ENCODE measurements at regions of chr13 and their contacts with region 1.

Region 1: GRCh38 chr13:32586080-32586900 is at the start of gene PDS5B:
- DNase-seq: peak; percentile 93
- H3K4me3 ChIP-seq: peak within 1 kb of the TSS; percentile 77 to 97 (median 94)
- H3K27ac ChIP-seq: peak within 1 kb of the TSS; percentile 67
- H3K4me1 ChIP-seq: peaks cover 10% of the 10 kb centered on the region
- H3K27me3 ChIP-seq: no peaks in the 10 kb centered on the region
- CTCF ChIP-seq: peak; percentile 37 to 77
- total RNA-seq, gene PDS5B: 14.3 to 22.4 TPM

Region 2: DNA sequence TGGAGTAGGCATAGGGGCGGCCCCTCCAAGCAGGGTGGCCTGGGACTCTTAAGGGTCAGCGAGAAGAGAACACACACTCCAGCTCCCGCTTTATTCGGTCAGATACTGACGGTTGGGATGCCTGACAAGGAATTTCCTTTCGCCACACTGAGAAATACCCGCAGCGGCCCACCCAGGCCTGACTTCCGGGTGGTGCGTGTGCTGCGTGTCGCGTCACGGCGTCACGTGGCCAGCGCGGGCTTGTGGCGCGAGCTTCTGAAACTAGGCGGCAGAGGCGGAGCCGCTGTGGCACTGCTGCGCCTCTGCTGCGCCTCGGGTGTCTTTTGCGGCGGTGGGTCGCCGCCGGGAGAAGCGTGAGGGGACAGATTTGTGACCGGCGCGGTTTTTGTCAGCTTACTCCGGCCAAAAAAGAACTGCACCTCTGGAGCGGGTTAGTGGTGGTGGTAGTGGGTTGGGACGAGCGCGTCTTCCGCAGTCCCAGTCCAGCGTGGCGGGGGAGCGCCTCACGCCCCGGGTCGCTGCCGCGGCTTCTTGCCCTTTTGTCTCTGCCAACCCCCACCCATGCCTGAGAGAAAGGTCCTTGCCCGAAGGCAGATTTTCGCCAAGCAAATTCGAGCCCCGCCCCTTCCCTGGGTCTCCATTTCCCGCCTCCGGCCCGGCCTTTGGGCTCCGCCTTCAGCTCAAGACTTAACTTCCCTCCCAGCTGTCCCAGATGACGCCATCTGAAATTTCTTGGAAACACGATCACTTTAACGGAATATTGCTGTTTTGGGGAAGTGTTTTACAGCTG is 270.9 kb before region 1 on chr13 and contains the starts of genes BRCA2 and ZAR1L:
- CTCF ChIA-PET with region 1: interaction called, 3 read pairs
- dilution Hi-C with region 1: no loop called
- in situ Hi-C with region 1: no loop called
- intact Hi-C with region 1: loop called (anchors 5 kb)
- DNase-seq: peak; percentile 83
- H3K4me3 ChIP-seq: peak within 1 kb of the TSS; percentile 70 to 92 (median 70)
- H3K27ac ChIP-seq: peak within 1 kb of the TSS; percentile 95
- H3K4me1 ChIP-seq: peaks cover 5% of the 10 kb centered on the region
- H3K27me3 ChIP-seq: no peaks in the 10 kb centered on the region
- CTCF ChIP-seq: no peak
- total RNA-seq, gene BRCA2: 3.0 to 16.0 TPM
- total RNA-seq, gene ZAR1L: not detected

Region 3: DNA sequence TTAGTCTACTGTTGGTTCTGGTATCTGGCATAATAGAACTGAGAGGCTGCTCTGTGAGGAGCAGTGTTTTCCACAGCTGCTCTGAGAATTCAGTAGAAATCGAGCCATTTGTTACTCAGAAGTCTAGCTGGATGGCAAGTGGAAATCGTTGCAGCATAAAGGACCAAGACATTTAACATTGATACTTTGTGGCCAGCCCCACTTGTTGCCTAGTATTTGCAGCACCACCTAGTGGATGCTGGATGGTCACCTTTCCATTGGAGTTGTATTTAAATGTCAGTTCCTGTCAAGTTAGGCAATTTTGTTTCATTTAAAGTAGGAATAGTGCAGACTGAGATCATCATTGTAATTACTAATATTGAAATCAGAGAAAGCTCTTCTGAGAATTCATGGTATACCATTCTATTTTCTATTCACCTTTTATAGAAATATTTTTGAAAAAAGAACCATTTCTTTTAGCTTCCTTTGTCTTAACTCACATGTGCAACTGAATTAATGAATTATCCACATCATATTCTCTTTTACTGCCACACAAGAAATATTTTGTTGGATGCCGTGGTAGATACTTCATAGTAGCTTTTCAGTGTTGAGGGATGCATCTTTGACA is 64.5 kb after region 1 on chr13:
- CTCF ChIA-PET with region 1: no interaction called
- dilution Hi-C with region 1: no loop called
- in situ Hi-C with region 1: loop called in 1 of 2 experiments (anchors 10 kb)
- intact Hi-C with region 1: loop called (anchors 1 kb)
- DNase-seq: peak; percentile 53
- H3K4me3 ChIP-seq: no peak overlapping the region
- H3K27ac ChIP-seq: no peak overlapping the region
- H3K4me1 ChIP-seq: no peaks in the 10 kb centered on the region
- H3K27me3 ChIP-seq: no peaks in the 10 kb centered on the region
- CTCF ChIP-seq: peak; percentile 81 to 83

Region 4: GRCh38 chr13:32911506-32911905 is 325.2 kb after region 1 on chr13:
- CTCF ChIA-PET with region 1: no interaction called
- dilution Hi-C with region 1: no loop called
- in situ Hi-C with region 1: loop called in 1 of 2 experiments (anchors 25 kb)
- intact Hi-C with region 1: loop called (anchors 1 kb)
- DNase-seq: peak; percentile 51
- H3K4me3 ChIP-seq: no peak overlapping the region
- H3K27ac ChIP-seq: no peak overlapping the region
- H3K4me1 ChIP-seq: no peaks in the 10 kb centered on the region
- H3K27me3 ChIP-seq: peaks cover 4% of the 10 kb centered on the region
- CTCF ChIP-seq: peak; percentile 52 to 85

Region 5: GRCh38 chr13:33285420-33286124 is 699.3 kb after region 1 on chr13 and contains the start of gene STARD13:
- CTCF ChIA-PET with region 1: no interaction called
- dilution Hi-C with region 1: no loop called
- in situ Hi-C with region 1: no loop called
- intact Hi-C with region 1: loop called (anchors 1 kb)
- DNase-seq: peak; percentile 96
- H3K4me3 ChIP-seq: peak within 1 kb of the TSS; percentile 67 to 94 (median 71)
- H3K27ac ChIP-seq: peak within 1 kb of the TSS; percentile 99
- H3K4me1 ChIP-seq: peaks cover 29% of the 10 kb centered on the region
- H3K27me3 ChIP-seq: no peaks in the 10 kb centered on the region
- CTCF ChIP-seq: peak; percentile 20 to 36
- total RNA-seq, gene STARD13: 10.8 to 15.5 TPM